ENCODE measurements at regions of chr12 and their contacts with region 1.

Region 1: DNA sequence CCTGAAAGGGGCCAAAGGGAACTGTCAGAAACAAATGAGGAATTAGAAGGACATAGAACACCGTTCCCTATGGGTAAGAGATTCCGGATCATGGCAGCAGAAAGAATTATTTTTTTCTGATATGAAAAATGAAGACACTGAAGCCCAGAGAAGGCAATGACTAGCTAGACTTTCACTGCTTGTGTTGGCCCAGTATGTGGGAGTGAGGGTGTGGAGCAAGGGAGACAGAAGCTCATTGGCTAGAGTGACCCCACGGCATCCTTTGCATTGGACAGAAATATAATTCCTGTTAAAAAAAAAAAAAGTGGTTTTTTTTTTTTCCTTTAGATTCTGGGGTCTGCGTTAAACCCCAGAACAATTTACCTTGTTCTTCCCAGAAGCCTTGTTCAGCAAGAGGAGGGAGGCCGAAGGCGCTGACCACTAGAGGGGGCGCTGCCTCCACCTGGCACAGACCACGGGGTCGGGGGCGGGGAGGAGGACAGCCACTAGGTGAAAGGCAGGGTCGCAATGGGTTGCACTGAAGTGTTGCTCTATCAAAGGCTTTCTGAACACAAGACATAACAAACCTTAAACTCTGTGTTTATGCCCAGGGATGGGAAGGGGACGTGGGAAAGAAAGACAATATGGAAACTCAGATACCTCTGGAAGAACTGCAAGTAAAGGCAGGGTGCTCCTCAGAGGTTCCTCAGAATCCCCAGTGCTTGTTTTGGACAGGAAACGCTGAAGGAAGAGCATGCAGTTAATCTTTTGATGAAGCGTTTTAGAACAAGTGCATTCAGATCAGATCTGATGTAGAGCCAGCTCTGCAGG is 156.8 kb downstream of the KCNA5 start:
- DNase-seq: peak in 1 of 2 donors; percentile 40
- H3K4me3 ChIP-seq: no peak overlapping the region
- H3K27ac ChIP-seq: no peak overlapping the region
- H3K4me1 ChIP-seq: no peaks in the 10 kb centered on the region
- H3K27me3 ChIP-seq: peaks cover 0 to 5% of the 10 kb centered on the region in 2 donors
- CTCF ChIP-seq: peak; percentile 40 to 57

Region 2: DNA sequence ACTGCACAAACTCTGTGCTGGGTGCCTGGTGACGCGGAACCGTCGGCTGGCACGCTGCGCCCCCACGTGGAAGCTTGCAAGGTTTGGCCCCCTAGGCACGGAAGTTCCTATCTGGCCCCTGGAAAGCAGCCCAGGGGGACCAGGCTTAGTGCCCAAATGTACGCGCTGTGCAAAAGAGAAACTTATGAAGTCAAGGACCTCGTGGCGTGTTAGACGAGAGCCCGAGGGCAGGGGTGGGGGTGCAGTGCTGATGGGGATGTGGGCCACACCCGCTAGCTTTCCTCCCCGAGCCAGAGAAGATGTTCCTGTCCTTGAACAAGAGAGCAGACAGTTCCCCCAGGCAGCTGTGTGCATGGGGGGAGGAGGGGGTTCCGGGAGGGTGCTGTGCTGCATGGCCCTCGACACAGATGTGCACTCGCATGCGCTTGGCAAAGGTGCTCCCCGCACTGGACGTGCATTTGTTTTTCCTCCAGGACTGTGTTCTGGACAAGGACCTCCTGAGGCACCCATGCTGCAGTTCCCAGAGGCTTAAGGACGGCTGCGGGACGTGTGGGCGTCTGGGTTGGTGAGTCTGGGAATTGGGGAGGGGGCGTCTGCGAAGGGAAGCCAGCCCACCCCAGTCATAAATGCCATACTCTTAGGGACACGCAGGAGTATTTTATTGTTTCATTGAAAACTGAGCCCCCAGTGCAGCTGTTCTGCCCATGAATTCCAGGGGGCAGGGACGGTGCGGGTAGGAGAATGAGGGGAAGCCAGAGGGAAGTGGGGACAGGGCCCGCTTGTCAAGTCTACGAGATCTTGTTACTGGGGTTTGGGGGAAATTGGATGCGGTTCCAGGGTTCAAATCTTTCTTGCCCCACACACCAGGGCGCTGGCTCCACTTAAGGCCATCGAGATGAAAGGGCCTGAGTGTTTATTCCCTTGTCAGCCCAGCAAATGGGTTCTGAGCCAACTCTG is 311.4 kb after region 1 on chr12:
- intact Hi-C with region 1: loop called (anchors 10 kb)
- DNase-seq: no peak
- H3K4me3 ChIP-seq: no peak overlapping the region
- H3K27ac ChIP-seq: no peak overlapping the region
- H3K4me1 ChIP-seq: peaks cover 0 to 11% (median 3%) of the 10 kb centered on the region in 4 donors
- H3K27me3 ChIP-seq: no peaks in the 10 kb centered on the region
- CTCF ChIP-seq: peak; percentile 61 to 68

Measured in tibial artery (tissue), 4 donors.